Colonic mucosa (tissue), 4 donors: ENCODE measurements at regions of chr10 and their contacts with region 1.

Region 1: GRCh38 chr10:21265621-21266020 is 259.9 kb downstream of the SKIDA1 start:
- DNase-seq: no peak
- H3K4me3 ChIP-seq: no peak overlapping the region
- H3K27ac ChIP-seq: no peak overlapping the region
- H3K4me1 ChIP-seq: no peaks in the 10 kb centered on the region
- H3K27me3 ChIP-seq: no peaks in the 10 kb centered on the region
- CTCF ChIP-seq: no peak

Region 2: GRCh38 chr10:20648263-20648874 is 617.3 kb before region 1 on chr10:
- intact Hi-C with region 1: no loop called
- DNase-seq: no peak
- H3K4me3 ChIP-seq: no peak overlapping the region
- H3K27ac ChIP-seq: no peak overlapping the region
- H3K4me1 ChIP-seq: no peaks in the 10 kb centered on the region
- H3K27me3 ChIP-seq: no peaks in the 10 kb centered on the region
- CTCF ChIP-seq: no peak

Region 3: DNA sequence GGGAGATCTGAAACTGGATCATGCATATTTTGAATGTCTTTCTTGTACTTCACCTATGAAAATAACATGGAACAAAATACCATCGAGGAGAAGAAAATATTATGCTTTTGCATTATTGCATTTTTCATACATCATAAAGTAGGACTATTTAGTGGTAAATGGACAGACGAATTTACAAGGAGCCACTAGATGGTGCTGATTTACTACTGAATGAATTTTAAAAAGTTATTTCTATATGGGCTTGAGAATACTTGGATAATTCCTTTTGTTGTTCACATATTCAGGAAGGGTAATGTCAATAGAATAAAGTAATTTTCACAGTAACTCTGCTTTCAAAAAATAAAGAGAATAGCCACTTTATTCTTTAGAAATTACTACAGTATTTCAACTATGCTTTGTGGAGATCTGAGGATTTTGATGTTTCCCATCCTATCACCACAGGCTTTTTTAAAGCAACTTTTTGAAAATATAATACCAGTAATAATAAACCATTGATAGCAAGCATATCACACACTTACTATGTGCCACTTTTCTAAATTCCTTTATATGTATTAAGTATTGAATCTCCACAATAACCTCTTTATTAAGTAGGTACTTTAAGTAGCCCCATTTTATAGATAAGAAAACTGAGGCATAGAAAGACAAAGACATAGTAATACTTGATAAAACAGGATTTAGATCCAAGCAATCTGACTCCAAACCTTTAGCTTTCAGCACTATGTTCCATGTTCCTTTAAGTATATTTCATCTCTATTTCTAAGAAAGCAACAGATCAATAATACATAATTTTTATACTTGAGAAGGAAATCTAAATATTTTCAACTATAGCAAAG is 407.1 kb before region 1 on chr10:
- intact Hi-C with region 1: loop called (anchors 10 kb)
- DNase-seq: no peak
- H3K4me3 ChIP-seq: no peak overlapping the region
- H3K27ac ChIP-seq: no peak overlapping the region
- H3K4me1 ChIP-seq: no peaks in the 10 kb centered on the region
- H3K27me3 ChIP-seq: no peaks in the 10 kb centered on the region
- CTCF ChIP-seq: no peak

Region 4: GRCh38 chr10:21078410-21079329 is 187.0 kb before region 1 on chr10:
- intact Hi-C with region 1: loop called (anchors 2 kb)
- DNase-seq: peak; percentile 65
- H3K4me3 ChIP-seq: no peak overlapping the region
- H3K27ac ChIP-seq: no peak overlapping the region
- H3K4me1 ChIP-seq: no peaks in the 10 kb centered on the region
- H3K27me3 ChIP-seq: no peaks in the 10 kb centered on the region
- CTCF ChIP-seq: peak; percentile 58

Region 5: GRCh38 chr10:21318540-21319167 is 53.0 kb after region 1 on chr10:
- intact Hi-C with region 1: no loop called
- DNase-seq: no peak
- H3K4me3 ChIP-seq: no peak overlapping the region
- H3K27ac ChIP-seq: no peak overlapping the region
- H3K4me1 ChIP-seq: no peaks in the 10 kb centered on the region
- H3K27me3 ChIP-seq: no peaks in the 10 kb centered on the region
- CTCF ChIP-seq: no peak